ENCODE measurements at regions of chr1 and their contacts with region 1.

Region 1: DNA sequence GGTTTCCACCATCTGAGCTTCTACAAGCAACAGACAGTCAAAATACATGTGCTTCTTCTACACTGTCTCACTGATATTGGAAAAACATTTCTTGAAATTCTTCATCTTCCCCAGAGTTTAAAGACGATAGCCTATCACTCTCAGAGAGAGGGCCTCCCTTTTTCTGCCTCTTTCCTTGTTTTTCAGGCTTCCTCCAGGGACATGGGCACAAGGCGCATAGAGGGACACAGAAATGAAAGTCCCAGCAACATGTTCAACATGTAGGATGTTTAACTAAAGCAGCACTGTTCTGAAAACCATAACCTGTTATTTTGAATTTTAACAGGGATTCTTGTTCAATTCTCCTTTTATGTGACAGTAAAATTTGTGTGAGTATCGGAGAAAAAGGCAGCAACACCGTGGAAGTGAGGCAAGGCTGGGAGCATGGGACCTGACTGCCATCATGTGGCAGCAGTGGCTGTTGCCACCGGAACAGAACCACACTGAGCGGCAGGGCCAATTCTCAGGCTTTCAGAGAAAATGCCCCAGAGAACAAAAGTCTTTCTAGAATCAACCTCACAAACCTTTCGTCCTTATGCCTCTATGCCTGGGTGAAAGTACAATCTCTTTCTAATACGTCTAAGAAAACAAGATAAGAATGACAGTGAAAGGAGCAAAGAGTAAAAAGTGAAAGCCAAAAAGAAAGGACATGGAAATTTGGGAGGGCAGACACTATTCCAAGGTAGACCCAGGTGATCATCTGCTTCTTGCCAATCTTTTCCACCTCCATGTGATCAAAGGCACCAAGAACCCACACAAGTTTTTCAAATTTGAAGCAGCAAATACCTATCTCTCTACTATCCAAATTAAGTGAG is 54.5 kb downstream of the PCNX2 start:
- DNase-seq: no peak
- H3K4me3 ChIP-seq: peak overlapping the region in 1 of 2 donors; percentile 20
- H3K27ac ChIP-seq: no peak overlapping the region
- H3K4me1 ChIP-seq: peaks cover 30% of the 10 kb centered on the region
- H3K27me3 ChIP-seq: no peaks in the 10 kb centered on the region
- CTCF ChIP-seq: peak; percentile 31 to 51 (median 43)
- POLR2A ChIP-seq: no peak

Region 2: DNA sequence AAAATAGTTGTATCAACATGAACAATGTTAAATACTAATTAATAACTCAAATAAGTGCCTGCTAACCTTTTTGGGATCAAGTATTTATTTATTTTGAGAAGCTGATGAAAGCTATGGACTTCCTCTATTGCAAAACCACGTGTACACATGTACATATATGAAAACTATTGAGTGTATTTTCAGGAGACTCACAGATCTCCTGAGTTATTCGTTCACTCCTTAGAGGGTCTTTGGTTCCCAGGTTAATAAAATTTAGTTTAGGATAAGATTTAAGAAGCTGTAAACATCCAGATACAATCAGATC is 1484.0 kb before region 1 on chr1:
- intact Hi-C with region 1: loop called (anchors 10 kb)
- DNase-seq: no peak
- H3K4me3 ChIP-seq: no peak overlapping the region
- H3K27ac ChIP-seq: no peak overlapping the region
- H3K4me1 ChIP-seq: peaks cover 11% of the 10 kb centered on the region
- H3K27me3 ChIP-seq: no peaks in the 10 kb centered on the region
- CTCF ChIP-seq: no peak
- POLR2A ChIP-seq: no peak

Region 3: DNA sequence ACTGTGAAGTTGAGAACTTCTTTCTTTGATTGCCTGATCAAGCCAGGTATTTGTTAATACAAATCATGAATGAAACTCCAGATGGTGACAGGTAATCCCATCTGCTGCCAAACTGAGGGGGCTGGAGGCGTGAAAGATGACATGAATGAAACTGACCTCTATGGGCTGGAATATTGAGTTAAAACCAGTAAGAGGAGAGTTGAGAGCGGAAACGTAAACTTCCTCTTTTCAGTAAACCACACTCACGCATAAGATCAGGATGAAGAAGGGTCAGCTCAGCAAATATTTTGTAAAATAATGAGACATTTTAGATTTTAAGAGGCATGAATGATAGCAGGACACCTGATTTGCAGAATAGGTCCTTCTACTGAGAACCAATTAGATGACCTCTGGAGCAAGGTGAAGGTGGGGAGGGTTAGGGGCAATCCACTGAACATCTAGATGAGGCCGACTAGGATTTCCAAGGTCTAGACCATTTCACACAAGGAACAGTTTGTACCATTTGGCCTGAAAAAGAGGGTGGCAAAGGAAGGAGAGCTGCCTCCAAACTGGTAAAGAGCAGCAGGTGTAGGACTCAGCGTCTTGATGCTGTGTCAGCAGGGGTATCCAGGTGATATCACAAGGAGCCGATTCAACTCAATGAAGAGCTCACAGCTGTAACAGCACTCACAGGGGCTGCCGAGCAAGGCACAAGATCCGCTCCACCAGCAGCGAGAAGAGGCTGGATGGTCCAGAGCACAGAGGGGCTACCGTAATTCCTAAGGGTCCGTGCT is 158.1 kb before region 1 on chr1:
- intact Hi-C with region 1: no loop called
- DNase-seq: no peak
- H3K4me3 ChIP-seq: no peak overlapping the region
- H3K27ac ChIP-seq: no peak overlapping the region
- H3K4me1 ChIP-seq: peaks cover 14% of the 10 kb centered on the region
- H3K27me3 ChIP-seq: no peaks in the 10 kb centered on the region
- CTCF ChIP-seq: no peak
- POLR2A ChIP-seq: no peak

Measured in vagina (tissue), 2 donors.